AG04450 (cell line): ENCODE measurements at regions of chr19 and their contacts with region 1.

Region 1: GRCh38 chr19:49546825-49547565 is 19.2 kb downstream of the RCN3 start:
- DNase-seq: peak; percentile 86
- H3K4me3 ChIP-seq: no peak overlapping the region
- H3K27ac ChIP-seq: no peak overlapping the region
- H3K27me3 ChIP-seq: no peaks in the 10 kb centered on the region
- CTCF ChIP-seq: peak; percentile 91

Region 2: GRCh38 chr19:49473868-49474544 is 73.0 kb before region 1 on chr19 and contains the start of gene FLT3LG:
- CTCF ChIA-PET with region 1: interaction called, 17 read pairs
- POLR2A ChIA-PET with region 1: interaction called, 4 read pairs
- DNase-seq: no peak
- H3K4me3 ChIP-seq: peak within 1 kb of the TSS; percentile 72
- H3K27ac ChIP-seq: peak within 1 kb of the TSS; percentile 11
- H3K27me3 ChIP-seq: no peaks in the 10 kb centered on the region
- CTCF ChIP-seq: peak; percentile 96
- polyA plus RNA-seq, gene FLT3LG: 3.7 and 5.9 TPM in 2 replicates

Region 3: GRCh38 chr19:49486710-49487276 is 60.2 kb before region 1 on chr19:
- CTCF ChIA-PET with region 1: no interaction called
- POLR2A ChIA-PET with region 1: no interaction called
- DNase-seq: no peak
- H3K4me3 ChIP-seq: no peak overlapping the region
- H3K27ac ChIP-seq: no peak overlapping the region
- H3K27me3 ChIP-seq: no peaks in the 10 kb centered on the region
- CTCF ChIP-seq: no peak

Region 4: DNA sequence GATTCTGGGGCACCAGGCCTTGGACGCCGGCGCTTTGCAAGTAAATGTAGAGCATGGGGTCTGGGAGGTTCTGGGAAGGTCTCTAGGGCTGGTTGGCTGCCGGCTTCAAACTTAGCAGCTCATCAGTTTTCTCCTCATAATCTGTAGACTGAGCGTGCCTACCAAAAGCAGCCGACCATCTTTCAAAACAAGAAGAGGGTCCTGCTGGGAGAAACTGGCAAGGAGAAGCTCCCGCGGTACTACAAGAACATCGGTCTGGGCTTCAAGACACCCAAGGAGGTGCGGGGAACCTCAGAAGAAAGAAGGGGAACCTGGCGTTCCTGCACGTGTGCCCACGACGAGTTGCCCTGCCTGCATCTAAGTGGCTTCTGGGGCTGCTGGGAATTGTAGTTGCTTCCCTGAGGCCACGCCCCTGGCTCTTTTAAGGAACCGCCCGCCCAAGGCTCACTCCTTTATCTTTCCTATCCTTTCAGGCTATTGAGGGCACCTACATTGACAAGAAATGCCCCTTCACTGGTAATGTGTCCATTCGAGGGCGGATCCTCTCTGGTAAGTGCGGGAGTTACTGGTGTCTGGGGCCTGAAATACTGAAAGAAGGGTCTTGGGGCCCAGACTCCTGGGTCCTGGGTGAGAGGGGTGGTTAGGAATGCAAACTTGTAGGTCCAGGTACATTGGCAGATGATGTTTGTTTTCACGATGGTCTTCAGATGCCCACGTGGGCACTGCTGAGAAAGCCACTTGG is 49.8 kb before region 1 on chr19:
- CTCF ChIA-PET with region 1: interaction called, 46 read pairs
- POLR2A ChIA-PET with region 1: interaction called, 8 read pairs
- DNase-seq: no peak
- H3K4me3 ChIP-seq: peak overlapping the region; percentile 92
- H3K27ac ChIP-seq: peak overlapping the region; percentile 21
- H3K27me3 ChIP-seq: no peaks in the 10 kb centered on the region
- CTCF ChIP-seq: no peak

Region 5: GRCh38 chr19:49502866-49503581 is 44.0 kb before region 1 on chr19:
- CTCF ChIA-PET with region 1: interaction called, 46 read pairs
- POLR2A ChIA-PET with region 1: interaction called, 4 read pairs
- DNase-seq: peak; percentile 59
- H3K4me3 ChIP-seq: no peak overlapping the region
- H3K27ac ChIP-seq: peak overlapping the region; percentile 47
- H3K27me3 ChIP-seq: no peaks in the 10 kb centered on the region
- CTCF ChIP-seq: peak; percentile 67

Region 6: DNA sequence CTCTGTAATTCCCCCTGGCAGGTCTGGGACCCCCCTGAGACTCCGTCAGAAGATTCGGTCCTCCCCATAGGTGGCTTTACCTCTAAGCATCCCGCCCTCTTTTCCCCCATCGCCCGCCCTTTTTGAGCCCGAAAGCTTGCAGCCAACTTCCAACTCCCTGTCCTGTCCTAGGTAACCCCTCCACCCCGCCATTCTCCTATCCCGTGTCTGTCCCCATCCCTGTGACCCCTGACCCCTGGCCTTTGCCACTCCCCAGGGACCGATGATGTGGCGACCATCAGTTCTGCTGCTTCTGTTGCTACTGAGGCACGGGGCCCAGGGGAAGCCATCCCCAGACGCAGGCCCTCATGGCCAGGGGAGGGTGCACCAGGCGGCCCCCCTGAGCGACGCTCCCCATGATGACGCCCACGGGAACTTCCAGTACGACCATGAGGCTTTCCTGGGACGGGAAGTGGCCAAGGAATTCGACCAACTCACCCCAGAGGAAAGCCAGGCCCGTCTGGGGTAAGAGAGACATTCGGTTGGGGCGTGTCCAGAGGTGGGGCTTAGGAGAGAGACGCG is 18.7 kb before region 1 on chr19:
- CTCF ChIA-PET with region 1: interaction called, 12 read pairs
- POLR2A ChIA-PET with region 1: interaction called, 7 read pairs
- DNase-seq: no peak
- H3K4me3 ChIP-seq: peak overlapping the region; percentile 79
- H3K27ac ChIP-seq: peak overlapping the region; percentile 87
- H3K27me3 ChIP-seq: no peaks in the 10 kb centered on the region
- CTCF ChIP-seq: no peak

Region 7: GRCh38 chr19:49534632-49535385 is 12.2 kb before region 1 on chr19:
- CTCF ChIA-PET with region 1: interaction called, 31 read pairs
- POLR2A ChIA-PET with region 1: interaction called, 5 read pairs
- DNase-seq: no peak
- H3K4me3 ChIP-seq: no peak overlapping the region
- H3K27ac ChIP-seq: no peak overlapping the region
- H3K27me3 ChIP-seq: no peaks in the 10 kb centered on the region
- CTCF ChIP-seq: no peak